ENCODE measurements at regions of chr3 and their contacts with region 1.

Region 1: GRCh38 chr3:196942226-196942914 is at the start of gene NCBP2:
- DNase-seq: peak; percentile 100
- ATAC-seq: peak; percentile 94
- H3K4me3 Mint-ChIP-seq: peak within 1 kb of the TSS; percentile 97
- H3K27ac Mint-ChIP-seq: peak within 1 kb of the TSS; percentile 98
- H3K4me1 Mint-ChIP-seq: peaks cover 49% of the 10 kb centered on the region
- H3K27me3 Mint-ChIP-seq: peaks cover 2% of the 10 kb centered on the region
- total RNA-seq, gene NCBP2: 49.1 to 52.4 TPM

Region 2: GRCh38 chr3:196867507-196868296 is 74.7 kb before region 1 on chr3 and contains the start of gene SENP5:
- CTCF ChIA-PET with region 1: interaction called, 11 read pairs
- POLR2A ChIA-PET with region 1: interaction called, 26 read pairs
- DNase-seq: peak; percentile 92
- ATAC-seq: peak; percentile 97
- H3K4me3 Mint-ChIP-seq: peak within 1 kb of the TSS; percentile 98
- H3K27ac Mint-ChIP-seq: peak within 1 kb of the TSS; percentile 99
- H3K4me1 Mint-ChIP-seq: peaks cover 19% of the 10 kb centered on the region
- H3K27me3 Mint-ChIP-seq: peaks cover 1% of the 10 kb centered on the region
- total RNA-seq, gene SENP5: 32.2 to 37.0 TPM

Region 3: GRCh38 chr3:196969660-196970546 is 27.5 kb after region 1 on chr3:
- CTCF ChIA-PET with region 1: interaction called, 8 read pairs
- POLR2A ChIA-PET with region 1: interaction called, 11 read pairs
- DNase-seq: peak; percentile 72
- ATAC-seq: peak; percentile 76
- H3K4me3 Mint-ChIP-seq: peak overlapping the region; percentile 69
- H3K27ac Mint-ChIP-seq: peak overlapping the region; percentile 78
- H3K4me1 Mint-ChIP-seq: peaks cover 14% of the 10 kb centered on the region
- H3K27me3 Mint-ChIP-seq: peaks cover 16% of the 10 kb centered on the region

Measured in activated CD8-positive, alpha-beta T cell treated with anti-CD3 and anti-CD28 coated beads, Interleukin-2, amount 10 ng/mL, durations not matched to agents 7 days and 5 days (primary cell).